HepG2 (cell line): ENCODE measurements at regions of chr7 and their contacts with region 1.

Region 1: GRCh38 chr7:74725840-74726239 is 48.0 kb upstream of the NCF1 start:
- DNase-seq: no peak
- ATAC-seq: no peak
- H3K4me3 ChIP-seq: no peak overlapping the region
- H3K27ac ChIP-seq: no peak overlapping the region
- H3K4me1 ChIP-seq: no peaks in the 10 kb centered on the region
- H3K27me3 ChIP-seq: no peaks in the 10 kb centered on the region
- CTCF ChIP-seq: no peak
- EP300 ChIP-seq: no peak
- POLR2A ChIP-seq: no peak
- RAD21 ChIP-seq: no peak

Region 2: DNA sequence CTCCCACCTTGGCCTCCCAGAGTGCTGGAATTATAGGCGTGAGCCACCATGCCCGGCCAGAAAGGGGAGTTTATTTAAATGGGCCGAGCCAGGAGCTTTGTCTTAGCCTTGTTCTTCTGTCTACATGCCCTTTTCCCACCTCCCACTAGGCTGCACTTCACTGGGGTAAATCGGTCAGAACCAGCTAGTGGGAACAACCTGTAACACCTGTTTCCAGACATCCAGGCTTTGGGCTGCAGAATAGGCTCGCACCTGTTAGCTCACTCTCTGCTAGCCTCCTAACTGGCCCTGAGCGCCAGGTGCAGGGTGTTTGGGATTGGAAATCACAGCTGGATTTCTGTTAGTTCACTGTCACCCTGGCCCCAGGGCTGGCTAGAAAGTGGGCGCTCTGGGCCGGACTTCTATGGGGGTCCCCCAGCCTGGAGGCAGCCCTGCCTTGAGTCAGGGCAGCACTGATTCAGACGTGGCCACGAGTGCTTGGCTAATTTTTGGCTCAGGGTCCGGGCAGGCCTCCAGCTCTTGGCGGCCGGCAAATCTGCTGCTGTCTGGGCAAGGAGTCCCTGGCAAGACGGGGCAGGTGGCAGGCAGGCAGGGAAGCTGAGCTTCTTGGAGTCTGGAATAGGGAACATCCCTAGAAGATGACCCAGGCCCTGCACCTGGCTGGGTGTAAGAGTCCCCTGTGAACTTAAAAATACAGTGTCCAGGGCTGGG is 223.5 kb before region 1 on chr7:
- CTCF ChIA-PET with region 1: no interaction called
- POLR2A ChIA-PET with region 1: no interaction called
- in situ Hi-C with region 1: no loop called
- intact Hi-C with region 1: no loop called
- DNase-seq: no peak
- ATAC-seq: no peak
- H3K4me3 ChIP-seq: no peak overlapping the region
- H3K27ac ChIP-seq: no peak overlapping the region
- H3K4me1 ChIP-seq: peaks cover 21% of the 10 kb centered on the region
- H3K27me3 ChIP-seq: no peaks in the 10 kb centered on the region
- CTCF ChIP-seq: no peak
- EP300 ChIP-seq: no peak
- POLR2A ChIP-seq: no peak
- RAD21 ChIP-seq: no peak

Region 3: GRCh38 chr7:74709880-74710671 is 15.8 kb before region 1 on chr7:
- CTCF ChIA-PET with region 1: no interaction called
- POLR2A ChIA-PET with region 1: no interaction called
- in situ Hi-C with region 1: no loop called
- intact Hi-C with region 1: loop called (anchors 1 kb)
- DNase-seq: no peak
- ATAC-seq: peak; percentile 67
- H3K4me3 ChIP-seq: no peak overlapping the region
- H3K27ac ChIP-seq: no peak overlapping the region
- H3K4me1 ChIP-seq: peaks cover 11% of the 10 kb centered on the region
- H3K27me3 ChIP-seq: no peaks in the 10 kb centered on the region
- CTCF ChIP-seq: peak; percentile 25; the same call in 1 of the 2 replicates
- EP300 ChIP-seq: no peak
- POLR2A ChIP-seq: no peak
- RAD21 ChIP-seq: no peak